ENCODE measurements at regions of chr14 and their contacts with region 1.

Region 1: GRCh38 chr14:63388763-63389431 is 70.2 kb upstream of the GPHB5 start:
- DNase-seq: peak; percentile 35 to 70 (median 45)
- ATAC-seq: peak; percentile 79 to 88 (median 86)
- H3K4me3 ChIP-seq: no peak overlapping the region
- H3K27ac ChIP-seq: no peak overlapping the region
- H3K4me1 ChIP-seq: no peaks in the 10 kb centered on the region
- H3K27me3 ChIP-seq: no peaks in the 10 kb centered on the region
- CTCF ChIP-seq: peak; percentile 73 to 86 (median 79)
- POLR2A ChIP-seq: no peak

Region 2: GRCh38 chr14:63174760-63175211 is 214.1 kb before region 1 on chr14:
- intact Hi-C with region 1: loop called in 1 of 10 experiments (anchors 10 kb)
- DNase-seq: peak in 2 of 5 donors; percentile 24 to 40
- ATAC-seq: peak in 3 of 4 donors; percentile 53 to 77 (median 69)
- H3K4me3 ChIP-seq: no peak overlapping the region
- H3K27ac ChIP-seq: peak overlapping the region in 1 of 12 donors; percentile 18
- H3K4me1 ChIP-seq: peaks cover 0 to 21% (median 5%) of the 10 kb centered on the region in 12 donors
- H3K27me3 ChIP-seq: no peaks in the 10 kb centered on the region
- CTCF ChIP-seq: peak; percentile 44 to 86 (median 70)
- POLR2A ChIP-seq: no peak

Region 3: GRCh38 chr14:63573581-63573980 is 184.7 kb after region 1 on chr14:
- intact Hi-C with region 1: no loop called
- DNase-seq: no peak
- ATAC-seq: no peak
- H3K4me3 ChIP-seq: no peak overlapping the region
- H3K27ac ChIP-seq: no peak overlapping the region
- H3K4me1 ChIP-seq: no peaks in the 10 kb centered on the region
- H3K27me3 ChIP-seq: no peaks in the 10 kb centered on the region
- CTCF ChIP-seq: no peak
- POLR2A ChIP-seq: no peak

Region 4: DNA sequence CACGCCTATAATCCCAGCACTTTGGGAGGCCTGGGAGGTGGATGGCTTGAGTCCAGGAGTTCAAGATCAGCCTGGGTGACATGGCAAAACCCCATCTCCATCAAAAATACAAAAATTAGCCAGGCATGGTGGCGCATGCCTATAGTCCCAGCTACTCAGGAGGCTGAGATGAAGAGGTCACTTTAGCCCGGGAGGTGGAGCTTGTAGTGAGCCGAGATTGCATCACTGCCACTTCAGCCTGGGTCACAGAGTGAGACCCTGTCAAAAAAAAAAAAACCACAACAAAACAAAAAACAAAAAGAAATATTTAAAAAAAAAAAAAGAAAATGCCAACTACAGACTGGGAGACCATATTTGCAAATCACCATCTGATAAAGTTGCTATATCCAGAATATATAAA is 235.3 kb after region 1 on chr14:
- intact Hi-C with region 1: loop called in 1 of 10 experiments (anchors 5 kb)
- DNase-seq: no peak
- ATAC-seq: no peak
- H3K4me3 ChIP-seq: no peak overlapping the region
- H3K27ac ChIP-seq: no peak overlapping the region
- H3K4me1 ChIP-seq: no peaks in the 10 kb centered on the region
- H3K27me3 ChIP-seq: no peaks in the 10 kb centered on the region
- CTCF ChIP-seq: no peak
- POLR2A ChIP-seq: no peak

Region 5: GRCh38 chr14:63632932-63633514 is 244.1 kb after region 1 on chr14:
- intact Hi-C with region 1: loop called in 6 of 10 experiments (anchors 5 to 10 kb)
- DNase-seq: no peak
- ATAC-seq: no peak
- H3K4me3 ChIP-seq: no peak overlapping the region
- H3K27ac ChIP-seq: no peak overlapping the region
- H3K4me1 ChIP-seq: no peaks in the 10 kb centered on the region
- H3K27me3 ChIP-seq: no peaks in the 10 kb centered on the region
- CTCF ChIP-seq: peak in 11 of 12 donors; percentile 15 to 49 (median 36)
- POLR2A ChIP-seq: no peak

Region 6: GRCh38 chr14:63641473-63642228 is 252.8 kb after region 1 on chr14 and contains the start of gene WDR89:
- intact Hi-C with region 1: loop called in 7 of 10 experiments (anchors 2 to 10 kb)
- DNase-seq: peak; percentile 97 to 98 (median 98)
- ATAC-seq: peak; percentile 98 to 99 (median 98)
- H3K4me3 ChIP-seq: peak within 1 kb of the TSS; percentile 35 to 82 (median 70)
- H3K27ac ChIP-seq: peak within 1 kb of the TSS; percentile 84 to 96 (median 92)
- H3K4me1 ChIP-seq: peaks cover 0 to 28% (median 10%) of the 10 kb centered on the region in 12 donors
- H3K27me3 ChIP-seq: no peaks in the 10 kb centered on the region
- CTCF ChIP-seq: peak; percentile 50 to 77 (median 68)
- POLR2A ChIP-seq: peak in 1 of 2 donors; percentile 44
- total RNA-seq, gene WDR89: 3.3 to 7.6 (median 6.3) TPM

Region 7: GRCh38 chr14:63760014-63760413 is 371.1 kb after region 1 on chr14:
- intact Hi-C with region 1: loop called in 4 of 10 experiments (anchors 10 kb)
- DNase-seq: no peak
- ATAC-seq: no peak
- H3K4me3 ChIP-seq: peak overlapping the region in 2 of 12 donors; percentile 38 to 39
- H3K27ac ChIP-seq: peak overlapping the region in 4 of 12 donors; percentile 6 to 90 (median 34)
- H3K4me1 ChIP-seq: peaks cover 0 to 17% (median 0%) of the 10 kb centered on the region in 12 donors
- H3K27me3 ChIP-seq: no peaks in the 10 kb centered on the region
- CTCF ChIP-seq: no peak
- POLR2A ChIP-seq: no peak

Region 8: GRCh38 chr14:63770187-63770807 is 381.4 kb after region 1 on chr14:
- intact Hi-C with region 1: loop called in 8 of 10 experiments (anchors 5 to 10 kb)
- DNase-seq: peak in 3 of 5 donors; percentile 25 to 43 (median 26)
- ATAC-seq: peak in 2 of 4 donors; percentile 59 to 62
- H3K4me3 ChIP-seq: no peak overlapping the region
- H3K27ac ChIP-seq: no peak overlapping the region
- H3K4me1 ChIP-seq: no peaks in the 10 kb centered on the region
- H3K27me3 ChIP-seq: no peaks in the 10 kb centered on the region
- CTCF ChIP-seq: peak; percentile 30 to 67 (median 57)
- POLR2A ChIP-seq: no peak